ENCODE measurements at regions of chr20 and their contacts with region 1.

Region 1: DNA sequence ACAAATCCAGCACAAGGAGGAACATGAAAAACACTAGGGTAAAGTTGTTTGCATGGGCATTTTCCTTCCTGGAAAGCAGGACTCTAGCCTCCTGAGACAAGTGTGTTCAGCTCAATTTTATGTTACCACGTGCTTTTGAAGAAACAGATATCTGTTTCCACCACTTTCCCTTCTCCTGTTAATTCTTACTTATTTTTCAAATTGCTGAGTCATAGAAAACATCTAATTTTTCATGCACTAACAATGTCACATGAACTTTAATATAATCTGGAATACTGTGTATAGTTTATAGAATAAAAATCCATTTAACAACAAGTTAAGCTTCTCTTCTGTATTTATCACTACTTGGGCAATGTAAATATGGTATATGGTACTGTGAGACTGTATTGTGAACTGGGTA is 174.2 kb downstream of the ISM1 start:
- DNase-seq: no peak
- ATAC-seq: no peak
- H3K4me3 ChIP-seq: no peak overlapping the region
- H3K27ac ChIP-seq: no peak overlapping the region
- H3K4me1 ChIP-seq: no peaks in the 10 kb centered on the region
- H3K27me3 ChIP-seq: no peaks in the 10 kb centered on the region
- CTCF ChIP-seq: no peak

Region 2: DNA sequence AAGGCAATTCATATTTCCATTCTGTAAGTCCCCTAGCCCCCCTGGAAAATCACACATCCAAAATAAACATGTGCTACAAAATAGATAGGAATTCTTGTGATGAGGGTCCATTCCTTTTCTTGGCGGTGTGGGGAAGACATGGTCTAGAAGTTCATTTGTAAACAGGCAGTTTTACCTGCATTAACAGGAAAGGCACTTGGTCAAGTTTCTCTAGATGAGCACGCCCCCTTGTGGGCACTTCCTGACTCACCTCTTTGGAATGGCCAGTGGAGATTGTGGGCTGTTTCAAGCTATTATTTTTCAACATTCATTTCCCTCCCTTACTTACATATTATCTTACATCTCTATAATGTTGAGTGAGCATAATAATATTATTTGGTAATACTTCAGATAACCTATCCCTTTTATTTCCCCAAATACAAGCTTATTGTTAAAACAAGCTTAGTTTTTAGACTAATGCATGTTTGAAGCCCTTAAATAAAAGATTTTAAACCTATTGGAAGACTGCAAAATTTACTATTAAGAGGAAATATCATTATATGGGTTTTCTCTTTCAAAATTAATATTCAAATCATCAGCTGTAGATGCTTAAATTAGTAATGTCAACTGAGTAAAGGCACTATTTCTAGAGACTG is 151.4 kb after region 1 on chr20:
- CTCF ChIA-PET with region 1: no interaction called
- POLR2A ChIA-PET with region 1: no interaction called
- intact Hi-C with region 1: loop called (anchors 1 kb)
- DNase-seq: peak; percentile 93
- ATAC-seq: peak; percentile 88
- H3K4me3 ChIP-seq: no peak overlapping the region
- H3K27ac ChIP-seq: no peak overlapping the region
- H3K4me1 ChIP-seq: peaks cover 7% of the 10 kb centered on the region
- H3K27me3 ChIP-seq: no peaks in the 10 kb centered on the region
- CTCF ChIP-seq: peak; percentile 92

Measured in PC-3 (cell line).